SK-N-SH (cell line): ENCODE measurements at regions of chr1 and their contacts with region 1.

Region 1: DNA sequence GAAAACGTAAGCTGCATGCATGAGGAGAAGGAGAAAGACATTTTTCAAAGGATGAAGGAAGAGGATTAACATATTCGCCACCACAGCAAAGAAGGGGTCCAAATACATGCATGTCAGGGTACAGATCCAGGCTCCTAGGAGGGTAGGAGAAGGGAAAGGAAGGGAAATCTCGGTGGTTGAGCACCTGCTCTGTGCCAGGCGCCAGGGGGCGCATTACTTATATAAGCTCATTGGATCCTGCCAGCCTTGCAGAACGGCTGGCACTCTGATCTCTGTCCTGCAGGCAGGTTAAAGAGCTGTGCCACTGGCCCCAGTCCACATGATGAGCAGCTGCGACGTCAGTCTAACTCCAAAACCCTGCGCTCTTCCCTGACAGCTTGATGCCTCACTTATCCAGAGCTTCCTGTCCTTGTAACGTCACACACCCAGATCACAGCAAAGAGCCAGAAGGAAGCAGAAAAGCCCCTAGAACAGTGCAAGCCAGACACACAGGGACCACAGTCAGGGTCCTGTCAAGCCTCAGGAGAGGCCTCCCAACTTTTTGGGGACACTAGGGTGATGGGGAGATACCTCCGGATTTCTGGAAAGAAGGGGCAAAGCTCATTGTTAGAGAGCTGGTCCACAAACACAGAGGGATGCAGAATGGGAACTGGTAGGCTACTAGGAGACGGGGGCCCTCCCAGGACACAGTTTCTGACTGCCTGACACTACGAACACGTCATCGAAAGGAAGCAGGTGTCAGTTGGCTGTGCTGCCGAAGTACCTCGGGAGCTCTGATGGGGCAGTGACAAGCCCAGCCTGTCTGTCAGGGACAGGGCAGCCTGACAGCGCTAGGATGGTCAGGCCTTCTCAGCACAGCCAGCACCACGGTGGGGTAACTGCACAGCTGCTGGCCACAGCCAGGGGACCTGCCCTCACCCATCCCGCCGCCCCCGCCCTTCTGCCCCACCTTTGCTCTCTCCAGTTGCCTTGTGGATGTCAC is 99.1 kb downstream of the BEND5 start:
- DNase-seq: peak; percentile 82
- H3K4me3 ChIP-seq: no peak overlapping the region
- H3K27ac ChIP-seq: no peak overlapping the region
- H3K4me1 ChIP-seq: peaks cover 0 to 4% of the 10 kb centered on the region in 2 experiments; a peak in 1 of 4 replicates
- H3K27me3 ChIP-seq: no peaks in the 10 kb centered on the region
- CTCF ChIP-seq: peak; percentile 77
- EP300 ChIP-seq: no peak
- RAD21 ChIP-seq: peak; percentile 74

Region 2: DNA sequence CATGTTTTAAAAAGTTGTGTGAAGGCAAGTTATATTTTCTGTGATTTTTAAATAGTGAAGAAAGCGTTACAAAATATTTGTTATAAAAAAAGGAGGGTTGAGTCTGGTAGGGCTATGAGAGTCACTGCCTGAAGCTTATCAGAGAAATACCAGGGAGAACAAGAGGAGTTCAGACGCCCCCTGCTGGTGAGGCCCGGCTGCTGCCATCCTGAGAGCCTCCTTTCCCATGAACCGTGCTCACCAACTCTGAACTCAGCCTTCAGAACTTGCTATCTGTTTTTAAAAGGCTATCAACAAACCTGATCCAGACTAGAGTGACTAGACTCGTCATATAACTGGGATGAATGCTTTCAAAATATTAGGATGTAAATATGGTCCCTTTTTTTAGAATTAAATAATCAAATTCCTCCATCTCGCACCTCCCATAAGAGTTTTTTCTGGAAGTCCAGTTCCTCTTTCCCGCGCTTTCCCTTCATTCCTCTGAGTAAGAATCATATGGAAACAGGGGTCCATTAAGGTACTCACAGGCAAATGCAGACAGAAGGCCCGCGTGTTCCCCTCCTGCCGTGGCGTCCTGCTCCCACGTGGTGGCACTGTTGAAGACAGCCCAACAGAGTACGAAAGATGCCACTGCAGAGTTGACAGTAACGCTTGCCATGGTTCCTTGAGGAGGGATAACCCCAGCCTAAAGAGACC is 179.4 kb before region 1 on chr1:
- CTCF ChIA-PET with region 1: no interaction called
- POLR2A ChIA-PET with region 1: no interaction called
- DNase-seq: peak; percentile 78
- H3K4me3 ChIP-seq: peak overlapping the region in 1 of 2 experiments; percentile 28; a peak in 1 of 4 replicates
- H3K27ac ChIP-seq: no peak overlapping the region
- H3K4me1 ChIP-seq: peaks cover 0 to 13% of the 10 kb centered on the region in 2 experiments; a peak in 1 of 4 replicates
- H3K27me3 ChIP-seq: no peaks in the 10 kb centered on the region
- CTCF ChIP-seq: peak; percentile 96
- EP300 ChIP-seq: no peak
- RAD21 ChIP-seq: peak; percentile 84

Region 3: GRCh38 chr1:48581270-48581669 is 96.3 kb before region 1 on chr1:
- CTCF ChIA-PET with region 1: interaction called, 162 read pairs
- POLR2A ChIA-PET with region 1: interaction called, 3 read pairs
- DNase-seq: peak; percentile 32
- H3K4me3 ChIP-seq: no peak overlapping the region
- H3K27ac ChIP-seq: peak overlapping the region in 1 of 2 experiments; percentile 60; a peak in 1 of 4 replicates
- H3K4me1 ChIP-seq: peaks cover 0 to 9% of the 10 kb centered on the region in 2 experiments; a peak in 2 of 4 replicates
- H3K27me3 ChIP-seq: no peaks in the 10 kb centered on the region
- CTCF ChIP-seq: no peak
- EP300 ChIP-seq: no peak
- RAD21 ChIP-seq: no peak

Region 4: DNA sequence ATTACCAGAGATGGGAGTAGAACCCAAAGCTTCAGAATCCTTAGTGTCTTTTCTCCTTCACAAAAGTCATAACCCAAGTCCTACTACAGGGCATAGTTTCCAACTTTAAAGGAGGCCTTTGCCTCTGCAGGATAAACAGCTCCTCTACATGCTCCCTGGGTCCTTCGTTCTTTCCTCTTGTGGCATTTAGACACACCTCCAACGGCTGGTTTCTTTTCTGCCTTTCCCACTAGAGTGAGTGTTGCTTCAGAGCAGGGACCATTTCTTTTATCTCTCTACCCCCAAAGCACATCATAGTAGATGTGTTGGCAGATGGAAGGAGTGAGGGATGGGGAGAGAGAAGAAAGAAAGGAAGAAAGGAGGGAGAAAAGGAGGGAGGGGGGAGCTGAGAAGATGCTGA is 60.9 kb before region 1 on chr1:
- CTCF ChIA-PET with region 1: no interaction called
- POLR2A ChIA-PET with region 1: no interaction called
- DNase-seq: no peak
- H3K4me3 ChIP-seq: no peak overlapping the region
- H3K27ac ChIP-seq: no peak overlapping the region
- H3K4me1 ChIP-seq: 0 out of 4 replicates have a peak, but pooled peaks cover 0 to 2% of the 10 kb centered on the region in 2 experiments
- H3K27me3 ChIP-seq: no peaks in the 10 kb centered on the region
- CTCF ChIP-seq: no peak
- EP300 ChIP-seq: no peak
- RAD21 ChIP-seq: no peak

Region 5: DNA sequence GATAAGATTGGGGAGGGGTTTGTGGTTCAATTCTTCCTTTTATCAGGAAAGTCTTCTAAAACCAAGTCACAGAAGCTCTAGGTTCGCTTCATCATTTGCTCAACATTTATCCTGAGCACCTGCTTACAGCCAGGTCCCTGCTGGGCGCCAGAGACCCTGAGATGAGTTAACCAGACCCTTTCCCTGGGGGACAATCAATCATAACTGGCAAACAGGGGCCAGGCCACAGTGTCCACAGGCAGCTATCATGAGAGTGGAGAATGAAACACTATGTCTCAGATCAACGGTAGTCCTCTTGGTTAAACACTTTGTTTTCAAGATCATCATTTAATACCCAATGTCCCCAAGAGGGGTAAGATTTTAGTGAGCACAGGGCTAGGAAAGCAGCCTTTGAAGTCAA is 47.7 kb before region 1 on chr1:
- CTCF ChIA-PET with region 1: interaction called, 11 read pairs
- POLR2A ChIA-PET with region 1: no interaction called
- DNase-seq: no peak
- H3K4me3 ChIP-seq: no peak overlapping the region
- H3K27ac ChIP-seq: no peak overlapping the region
- H3K4me1 ChIP-seq: no peaks in the 10 kb centered on the region
- H3K27me3 ChIP-seq: no peaks in the 10 kb centered on the region
- CTCF ChIP-seq: no peak
- EP300 ChIP-seq: no peak
- RAD21 ChIP-seq: no peak

Region 6: DNA sequence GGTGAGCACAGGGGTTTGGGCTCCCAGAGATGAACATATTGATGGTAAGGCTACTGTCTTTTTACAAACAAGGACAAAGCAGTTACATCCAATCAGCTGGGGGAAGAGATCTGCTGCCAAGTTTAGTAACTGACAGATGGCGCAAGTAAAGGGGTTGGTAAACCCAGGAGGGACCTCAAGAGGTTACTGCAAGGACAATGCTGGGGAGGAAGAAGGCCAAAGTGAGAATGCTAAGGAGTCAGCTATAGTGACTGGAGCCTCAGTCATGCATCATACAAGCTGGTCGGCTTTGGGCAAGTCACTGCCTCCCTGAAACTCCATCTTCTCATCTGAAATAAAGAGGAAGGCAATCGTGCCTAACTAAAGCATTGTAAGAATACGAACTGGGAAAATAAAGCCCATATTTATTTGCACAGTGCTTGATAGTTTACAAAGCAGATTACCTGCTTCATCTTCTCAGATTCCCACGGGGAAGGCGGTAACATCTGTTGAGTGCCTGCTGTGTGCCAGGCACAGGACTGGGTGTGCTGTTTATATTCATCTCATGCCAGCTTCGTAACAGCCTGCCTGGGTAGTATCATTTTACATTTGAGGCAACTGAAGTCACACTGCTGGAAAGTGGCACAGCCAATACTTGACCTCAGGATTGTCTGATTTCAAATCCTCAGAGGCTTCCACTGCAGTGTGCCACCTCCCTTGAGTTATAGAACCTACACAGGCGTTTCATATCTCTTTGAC is 15.7 kb before region 1 on chr1:
- CTCF ChIA-PET with region 1: interaction called, 78 read pairs
- POLR2A ChIA-PET with region 1: interaction called, 3 read pairs
- DNase-seq: no peak
- H3K4me3 ChIP-seq: no peak overlapping the region
- H3K27ac ChIP-seq: no peak overlapping the region
- H3K4me1 ChIP-seq: no peaks in the 10 kb centered on the region
- H3K27me3 ChIP-seq: no peaks in the 10 kb centered on the region
- CTCF ChIP-seq: no peak
- EP300 ChIP-seq: no peak
- RAD21 ChIP-seq: no peak

Region 7: GRCh38 chr1:48697066-48697707 is 19.6 kb after region 1 on chr1:
- CTCF ChIA-PET with region 1: interaction called, 86 read pairs
- POLR2A ChIA-PET with region 1: no interaction called
- DNase-seq: peak; percentile 68
- H3K4me3 ChIP-seq: no peak overlapping the region
- H3K27ac ChIP-seq: no peak overlapping the region
- H3K4me1 ChIP-seq: no peaks in the 10 kb centered on the region; a peak in 1 of 4 replicates
- H3K27me3 ChIP-seq: peaks cover 1% of the 10 kb centered on the region; the same call in 1 of the 2 replicates
- CTCF ChIP-seq: peak; percentile 94
- EP300 ChIP-seq: no peak
- RAD21 ChIP-seq: peak; percentile 76

Region 8: DNA sequence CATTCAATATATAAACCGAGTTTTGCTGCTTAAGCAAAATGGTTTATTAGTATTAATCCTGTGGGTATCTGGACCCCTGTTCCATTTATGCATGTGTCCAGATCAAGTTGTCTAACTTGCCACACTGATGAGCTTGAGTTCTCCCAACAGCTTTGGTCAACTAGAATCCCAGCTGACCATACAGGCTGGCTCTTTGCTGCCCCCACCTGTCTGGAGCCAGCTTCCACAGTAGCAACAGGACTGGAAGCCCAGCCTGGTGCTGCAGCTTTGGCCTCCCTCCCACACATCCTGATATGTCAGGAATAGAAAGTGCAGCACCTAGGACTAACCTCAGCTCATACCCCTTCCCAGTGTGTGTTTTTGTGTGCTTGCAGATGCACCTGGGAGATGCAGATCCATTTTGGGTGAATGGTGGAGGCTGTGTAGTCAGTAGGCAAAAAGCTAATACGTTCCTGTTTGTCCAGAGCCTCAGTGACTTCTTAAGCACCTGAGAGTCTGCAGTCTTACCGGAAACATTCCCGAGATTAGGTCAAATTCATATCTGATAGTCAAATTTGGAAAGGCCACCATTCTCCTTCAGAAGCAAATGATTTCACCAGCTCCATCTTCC is 140.0 kb after region 1 on chr1:
- CTCF ChIA-PET with region 1: interaction called, 65 read pairs
- POLR2A ChIA-PET with region 1: interaction called, 3 read pairs
- DNase-seq: peak; percentile 51
- H3K4me3 ChIP-seq: no peak overlapping the region; a peak in 1 of 4 replicates
- H3K27ac ChIP-seq: no peak overlapping the region
- H3K4me1 ChIP-seq: peaks cover 0 to 2% of the 10 kb centered on the region in 2 experiments; a peak in 2 of 4 replicates
- H3K27me3 ChIP-seq: no peaks in the 10 kb centered on the region
- CTCF ChIP-seq: peak; percentile 78
- EP300 ChIP-seq: no peak
- RAD21 ChIP-seq: peak; percentile 91

Region 9: GRCh38 chr1:50348449-50349241 is 1671.0 kb after region 1 on chr1:
- CTCF ChIA-PET with region 1: interaction called, 30 read pairs
- POLR2A ChIA-PET with region 1: no interaction called
- DNase-seq: peak; percentile 77
- H3K4me3 ChIP-seq: no peak overlapping the region
- H3K27ac ChIP-seq: peak overlapping the region in 1 of 2 experiments; percentile 48; a peak in 1 of 4 replicates
- H3K4me1 ChIP-seq: peaks cover 0 to 23% of the 10 kb centered on the region in 2 experiments; a peak in 2 of 4 replicates
- H3K27me3 ChIP-seq: no peaks in the 10 kb centered on the region
- CTCF ChIP-seq: peak; percentile 82
- EP300 ChIP-seq: peak in 1 of 2 experiments; percentile 30; a peak in 1 of 4 replicates
- RAD21 ChIP-seq: peak; percentile 99